Endothelial cell of umbilical vein (primary cell): ENCODE measurements at regions of chr10 and their contacts with region 1.

Region 1: GRCh38 chr10:92087750-92088395 is 164.3 kb downstream of the BTAF1 start:
- DNase-seq: peak; percentile 91
- H3K4me3 ChIP-seq: no peak overlapping the region
- H3K27ac ChIP-seq: no peak overlapping the region
- H3K4me1 ChIP-seq: no peaks in the 10 kb centered on the region
- H3K27me3 ChIP-seq: no peaks in the 10 kb centered on the region
- CTCF ChIP-seq: peak; percentile 73 to 82
- POLR2A ChIP-seq: no peak

Region 2: DNA sequence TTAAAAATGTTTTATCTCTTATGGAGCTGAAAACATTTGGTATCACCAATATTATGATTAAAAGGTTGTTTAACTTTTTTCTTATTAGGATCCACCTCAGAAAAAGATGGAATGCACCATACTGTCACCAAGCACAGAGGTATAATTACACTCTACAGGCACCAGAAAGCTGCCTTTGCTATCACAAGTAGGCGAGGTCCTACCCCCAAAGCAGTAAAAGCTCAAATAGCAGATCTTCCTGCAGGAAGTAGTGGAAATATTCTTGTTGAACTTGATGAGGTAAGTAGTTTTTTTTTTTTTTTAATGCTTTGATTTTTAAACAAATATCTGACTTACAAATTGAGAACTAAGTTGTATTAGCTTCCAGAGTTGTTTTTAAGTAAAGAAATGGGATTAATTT is 95.8 kb before region 1 on chr10:
- CTCF ChIA-PET with region 1: no interaction called
- POLR2A ChIA-PET with region 1: no interaction called
- dilution Hi-C with region 1: no loop called
- intact Hi-C with region 1: no loop called
- DNase-seq: no peak
- H3K4me3 ChIP-seq: no peak overlapping the region
- H3K27ac ChIP-seq: no peak overlapping the region
- H3K4me1 ChIP-seq: no peaks in the 10 kb centered on the region
- H3K27me3 ChIP-seq: no peaks in the 10 kb centered on the region
- CTCF ChIP-seq: no peak
- POLR2A ChIP-seq: no peak

Region 3: DNA sequence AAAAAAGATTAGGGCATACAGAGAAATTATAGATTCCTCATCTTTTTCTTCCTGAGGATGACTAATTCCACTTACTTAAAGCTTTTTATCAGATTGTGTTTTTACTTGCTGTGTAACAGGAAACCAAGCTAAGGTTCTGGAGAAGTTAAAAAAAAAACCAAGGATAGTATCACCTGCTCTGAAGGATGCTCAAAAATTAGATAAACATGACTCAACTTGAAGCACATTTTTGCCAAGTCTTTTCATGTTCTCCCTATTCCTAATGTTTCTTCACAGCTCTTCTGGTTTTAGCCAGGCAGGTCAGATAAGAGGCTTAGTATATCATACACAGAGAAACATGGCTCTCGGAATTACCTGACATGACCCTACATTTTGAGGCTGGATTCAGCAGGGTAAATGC is 112.7 kb after region 1 on chr10:
- CTCF ChIA-PET with region 1: no interaction called
- POLR2A ChIA-PET with region 1: no interaction called
- dilution Hi-C with region 1: no loop called
- intact Hi-C with region 1: loop called (anchors 5 kb)
- DNase-seq: peak; percentile 27
- H3K4me3 ChIP-seq: no peak overlapping the region
- H3K27ac ChIP-seq: no peak overlapping the region
- H3K4me1 ChIP-seq: peaks cover 5% of the 10 kb centered on the region
- H3K27me3 ChIP-seq: no peaks in the 10 kb centered on the region
- CTCF ChIP-seq: no peak
- POLR2A ChIP-seq: no peak

Region 4: GRCh38 chr10:92290837-92291615 is 203.2 kb after region 1 on chr10 and contains the starts of genes CPEB3 and MARCHF5:
- CTCF ChIA-PET with region 1: interaction called, 87 read pairs
- POLR2A ChIA-PET with region 1: no interaction called
- dilution Hi-C with region 1: no loop called
- intact Hi-C with region 1: loop called (anchors 1 kb)
- DNase-seq: peak; percentile 98
- H3K4me3 ChIP-seq: peak within 1 kb of the TSS; percentile 66 to 99 (median 79)
- H3K27ac ChIP-seq: peak within 1 kb of the TSS; percentile 87
- H3K4me1 ChIP-seq: peaks cover 15% of the 10 kb centered on the region
- H3K27me3 ChIP-seq: no peaks in the 10 kb centered on the region
- CTCF ChIP-seq: peak; percentile 45 to 65
- POLR2A ChIP-seq: peak; percentile 52
- total RNA-seq, gene CPEB3: 2.2 and 2.3 TPM in 2 replicates
- total RNA-seq, gene MARCHF5: 48.0 and 55.7 TPM in 2 replicates

Region 5: GRCh38 chr10:92419740-92420545 is 332.1 kb after region 1 on chr10:
- CTCF ChIA-PET with region 1: interaction called, 21 read pairs
- POLR2A ChIA-PET with region 1: no interaction called
- dilution Hi-C with region 1: no loop called
- intact Hi-C with region 1: no loop called
- DNase-seq: peak; percentile 38
- H3K4me3 ChIP-seq: peak overlapping the region; percentile 33 to 34 (median 33)
- H3K27ac ChIP-seq: no peak overlapping the region
- H3K4me1 ChIP-seq: peaks cover 4% of the 10 kb centered on the region
- H3K27me3 ChIP-seq: peaks cover 2 to 3% of the 10 kb centered on the region in 2 experiments
- CTCF ChIP-seq: peak; percentile 46 to 67
- POLR2A ChIP-seq: no peak

Region 6: GRCh38 chr10:92573798-92574547 is 486.1 kb after region 1 on chr10 and contains the start of gene IDE:
- CTCF ChIA-PET with region 1: no interaction called
- POLR2A ChIA-PET with region 1: no interaction called
- dilution Hi-C with region 1: no loop called
- intact Hi-C with region 1: loop called (anchors 10 kb)
- DNase-seq: peak; percentile 92
- H3K4me3 ChIP-seq: peak within 1 kb of the TSS; percentile 63 to 84 (median 68)
- H3K27ac ChIP-seq: peak within 1 kb of the TSS; percentile 89
- H3K4me1 ChIP-seq: peaks cover 18% of the 10 kb centered on the region
- H3K27me3 ChIP-seq: no peaks in the 10 kb centered on the region
- CTCF ChIP-seq: peak; percentile 83 to 87
- POLR2A ChIP-seq: peak; percentile 84
- total RNA-seq, gene IDE: 52.6 and 53.5 TPM in 2 replicates